BJ (cell line): ENCODE measurements at regions of chr13 and their contacts with region 1.

Region 1: GRCh38 chr13:112726016-112726767 is 36.4 kb downstream of the ATP11A start:
- DNase-seq: no peak
- H3K4me3 ChIP-seq: no peak overlapping the region
- H3K27me3 ChIP-seq: no peaks in the 10 kb centered on the region
- CTCF ChIP-seq: no peak

Region 2: DNA sequence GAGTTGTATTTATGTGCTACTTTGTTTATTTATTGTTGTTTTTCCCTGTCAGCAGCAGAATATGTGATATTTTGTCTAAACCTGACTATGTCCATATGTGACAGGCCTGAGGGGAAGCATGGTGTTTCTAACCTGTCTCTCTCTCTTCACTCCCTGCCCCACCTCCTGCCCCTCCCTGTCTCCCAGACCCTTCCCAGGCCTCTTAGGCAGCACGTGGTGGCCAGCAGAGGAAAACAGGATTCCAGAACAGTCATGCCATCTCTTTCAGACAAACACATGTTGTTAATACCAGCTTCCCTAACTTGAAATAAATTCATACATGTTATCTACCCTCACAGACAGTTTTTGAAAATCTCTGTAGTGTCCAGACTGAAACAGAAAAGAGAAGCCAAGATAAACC is 67.4 kb before region 1 on chr13:
- CTCF ChIA-PET with region 1: no interaction called
- POLR2A ChIA-PET with region 1: interaction called, 14 read pairs
- DNase-seq: no peak
- H3K4me3 ChIP-seq: no peak overlapping the region
- H3K27me3 ChIP-seq: no peaks in the 10 kb centered on the region
- CTCF ChIP-seq: no peak